SK-N-SH (cell line): ENCODE measurements at regions of chr2 and their contacts with region 1.

Region 1: DNA sequence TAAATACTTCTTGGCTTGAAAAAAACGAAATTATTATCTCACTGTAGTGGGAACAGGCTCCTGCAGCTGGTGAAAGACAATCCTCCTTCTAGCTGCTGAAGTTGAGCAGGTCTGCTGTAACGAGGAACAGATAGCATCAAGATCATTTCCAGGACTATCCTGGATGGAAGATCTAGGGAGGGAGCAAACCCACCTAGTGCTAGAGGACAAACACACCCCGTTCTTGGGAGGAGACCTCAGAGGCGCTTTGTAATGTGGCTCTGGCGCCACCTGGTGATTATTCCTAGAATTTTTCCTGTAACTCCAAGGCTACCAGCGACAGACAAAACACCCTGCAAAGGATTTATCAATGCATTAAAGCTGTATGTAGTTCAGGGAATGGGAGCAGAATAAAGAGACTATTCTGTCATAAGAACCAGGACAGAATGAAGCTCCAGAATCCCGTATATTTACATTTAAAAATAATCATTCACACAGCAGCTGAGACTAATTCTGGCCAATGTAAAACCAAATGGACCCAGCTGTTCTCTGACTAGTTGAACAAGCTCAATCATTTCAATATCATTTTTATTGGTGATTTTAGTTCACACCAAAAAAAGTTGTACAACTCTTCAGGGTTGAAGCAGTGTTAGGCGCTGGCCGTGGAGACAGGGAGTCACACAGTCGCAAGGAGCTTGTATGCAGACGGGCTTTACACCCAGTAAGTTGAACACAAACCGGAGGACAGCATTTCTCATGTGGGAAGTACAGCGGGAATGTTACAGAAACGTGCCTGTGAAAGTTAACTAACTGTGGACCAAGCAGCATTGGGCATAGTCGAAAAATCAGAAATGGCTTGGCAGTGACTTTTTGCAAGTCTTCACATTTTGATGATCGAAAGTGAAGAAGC is 290.3 kb downstream of the TRIB2 start:
- DNase-seq: peak; percentile 73
- H3K4me3 ChIP-seq: peak overlapping the region; percentile 14 to 39; a peak in 2 of 4 replicates
- H3K27ac ChIP-seq: peak overlapping the region; percentile 3 to 64; a peak in 3 of 4 replicates
- H3K4me1 ChIP-seq: peaks cover 25 to 32% of the 10 kb centered on the region in 2 experiments
- H3K27me3 ChIP-seq: no peaks in the 10 kb centered on the region
- CTCF ChIP-seq: peak; percentile 94
- EP300 ChIP-seq: peak; percentile 16 to 94; a peak in 2 of 4 replicates
- RAD21 ChIP-seq: peak; percentile 100

Region 2: GRCh38 chr2:11822746-11823451 is 1184.2 kb before region 1 on chr2:
- CTCF ChIA-PET with region 1: interaction called, 130 read pairs
- POLR2A ChIA-PET with region 1: no interaction called
- DNase-seq: no peak
- H3K4me3 ChIP-seq: no peak overlapping the region
- H3K27ac ChIP-seq: no peak overlapping the region
- H3K4me1 ChIP-seq: no peaks in the 10 kb centered on the region
- H3K27me3 ChIP-seq: no peaks in the 10 kb centered on the region
- CTCF ChIP-seq: no peak
- EP300 ChIP-seq: no peak
- RAD21 ChIP-seq: no peak

Region 3: GRCh38 chr2:12176623-12177454 is 830.2 kb before region 1 on chr2:
- CTCF ChIA-PET with region 1: interaction called, 10 read pairs
- POLR2A ChIA-PET with region 1: no interaction called
- DNase-seq: peak; percentile 80
- H3K4me3 ChIP-seq: peak overlapping the region in 1 of 2 experiments; percentile 14; a peak in 2 of 4 replicates
- H3K27ac ChIP-seq: peak overlapping the region; percentile 74 to 97
- H3K4me1 ChIP-seq: peaks cover 25 to 34% of the 10 kb centered on the region in 2 experiments
- H3K27me3 ChIP-seq: no peaks in the 10 kb centered on the region
- CTCF ChIP-seq: no peak
- EP300 ChIP-seq: peak; percentile 74 to 91; a peak in 2 of 4 replicates
- RAD21 ChIP-seq: peak; percentile 34

Region 4: GRCh38 chr2:12733846-12734245 is 273.2 kb before region 1 on chr2:
- CTCF ChIA-PET with region 1: interaction called, 16 read pairs
- POLR2A ChIA-PET with region 1: interaction called, 4 read pairs
- DNase-seq: no peak
- H3K4me3 ChIP-seq: no peak overlapping the region
- H3K27ac ChIP-seq: no peak overlapping the region
- H3K4me1 ChIP-seq: peaks cover 0 to 3% of the 10 kb centered on the region in 2 experiments; a peak in 1 of 4 replicates
- H3K27me3 ChIP-seq: no peaks in the 10 kb centered on the region
- CTCF ChIP-seq: no peak
- EP300 ChIP-seq: no peak
- RAD21 ChIP-seq: no peak

Region 5: DNA sequence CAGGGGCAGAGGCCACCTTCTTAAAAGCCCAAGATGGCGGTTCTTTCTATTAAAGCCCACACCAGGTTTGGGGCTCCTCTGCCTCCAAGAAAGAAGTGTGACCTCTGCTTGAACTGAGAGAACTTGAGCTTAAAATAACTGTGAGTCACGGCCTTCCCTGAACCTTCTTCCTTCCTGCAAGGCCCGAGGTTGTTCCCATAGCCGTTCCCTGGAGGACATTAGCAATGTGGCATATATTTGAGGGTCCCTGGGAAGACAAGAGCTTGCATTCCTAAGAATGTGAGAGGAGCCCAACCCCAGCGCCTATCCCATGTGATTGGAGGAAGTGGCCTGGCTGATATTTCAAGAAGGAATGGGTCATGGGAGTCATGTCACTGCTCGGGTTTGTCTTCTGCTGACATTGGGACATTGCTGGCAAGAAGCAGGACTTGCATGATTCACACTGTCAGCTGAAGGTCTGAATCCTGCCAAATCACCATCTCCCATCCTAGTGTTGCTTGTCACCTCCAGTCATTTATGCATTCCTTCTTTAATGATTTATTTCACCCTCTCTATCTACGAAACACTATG is 122.3 kb before region 1 on chr2:
- CTCF ChIA-PET with region 1: interaction called, 10 read pairs
- POLR2A ChIA-PET with region 1: no interaction called
- DNase-seq: no peak
- H3K4me3 ChIP-seq: no peak overlapping the region
- H3K27ac ChIP-seq: peak overlapping the region in 1 of 2 experiments; percentile 73; a peak in 2 of 4 replicates
- H3K4me1 ChIP-seq: peaks cover 3 to 13% of the 10 kb centered on the region in 2 experiments; a peak in 3 of 4 replicates
- H3K27me3 ChIP-seq: no peaks in the 10 kb centered on the region
- CTCF ChIP-seq: no peak
- EP300 ChIP-seq: no peak; a peak in 1 of 4 replicates
- RAD21 ChIP-seq: no peak

Region 6: DNA sequence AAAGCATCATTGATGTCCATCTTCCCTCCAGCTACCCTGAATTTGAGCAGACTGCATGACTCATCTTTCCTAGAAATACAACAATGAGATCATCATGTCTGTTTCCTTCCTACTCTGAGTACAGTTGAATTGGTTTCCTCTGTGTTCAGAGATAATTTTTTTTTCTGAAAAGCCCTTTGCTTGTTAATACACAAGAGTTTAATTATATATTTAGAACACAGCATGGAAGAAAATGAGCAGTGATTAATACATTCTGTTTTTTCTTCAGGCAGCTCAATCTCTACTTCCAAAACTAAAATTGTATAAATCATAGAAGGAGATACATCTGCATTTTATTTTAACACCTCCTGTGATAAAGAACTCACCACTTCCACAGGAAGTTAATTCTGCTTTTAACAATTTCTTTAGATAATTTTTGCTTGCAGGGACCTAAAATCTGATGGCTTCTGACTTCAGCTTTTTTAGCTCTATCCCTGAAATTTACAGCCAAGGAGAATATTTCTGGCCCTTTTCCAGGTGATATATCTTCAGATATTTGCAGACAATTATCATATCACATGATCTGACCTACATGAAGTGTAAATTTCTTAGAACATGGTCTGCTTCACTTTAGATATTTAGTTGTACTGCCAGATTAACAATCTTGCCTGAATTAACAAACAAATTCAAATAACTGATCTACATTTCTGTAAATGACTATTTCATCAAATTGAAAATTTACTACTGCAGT is 41.4 kb before region 1 on chr2:
- CTCF ChIA-PET with region 1: interaction called, 24 read pairs
- POLR2A ChIA-PET with region 1: no interaction called
- DNase-seq: peak; percentile 55
- H3K4me3 ChIP-seq: no peak overlapping the region
- H3K27ac ChIP-seq: peak overlapping the region; percentile 33 to 98; a peak in 3 of 4 replicates
- H3K4me1 ChIP-seq: peaks cover 7 to 31% of the 10 kb centered on the region in 2 experiments
- H3K27me3 ChIP-seq: no peaks in the 10 kb centered on the region
- CTCF ChIP-seq: no peak
- EP300 ChIP-seq: peak; percentile 84 to 85
- RAD21 ChIP-seq: no peak